MCF 10A (cell line): ENCODE measurements at regions of chr1 and their contacts with region 1.

Region 1: GRCh38 chr1:231240883-231241735 is at the start of gene GNPAT:
- DNase-seq: peak; percentile 95
- H3K4me3 Mint-ChIP-seq: peak within 1 kb of the TSS; percentile 85
- H3K27ac Mint-ChIP-seq: peak within 1 kb of the TSS; percentile 97
- H3K4me1 Mint-ChIP-seq: peaks cover 50% of the 10 kb centered on the region
- H3K27me3 Mint-ChIP-seq: no peaks in the 10 kb centered on the region
- CTCF ChIP-seq: no peak
- total RNA-seq, gene GNPAT: 60.9 and 64.4 TPM in 2 replicates

Region 2: DNA sequence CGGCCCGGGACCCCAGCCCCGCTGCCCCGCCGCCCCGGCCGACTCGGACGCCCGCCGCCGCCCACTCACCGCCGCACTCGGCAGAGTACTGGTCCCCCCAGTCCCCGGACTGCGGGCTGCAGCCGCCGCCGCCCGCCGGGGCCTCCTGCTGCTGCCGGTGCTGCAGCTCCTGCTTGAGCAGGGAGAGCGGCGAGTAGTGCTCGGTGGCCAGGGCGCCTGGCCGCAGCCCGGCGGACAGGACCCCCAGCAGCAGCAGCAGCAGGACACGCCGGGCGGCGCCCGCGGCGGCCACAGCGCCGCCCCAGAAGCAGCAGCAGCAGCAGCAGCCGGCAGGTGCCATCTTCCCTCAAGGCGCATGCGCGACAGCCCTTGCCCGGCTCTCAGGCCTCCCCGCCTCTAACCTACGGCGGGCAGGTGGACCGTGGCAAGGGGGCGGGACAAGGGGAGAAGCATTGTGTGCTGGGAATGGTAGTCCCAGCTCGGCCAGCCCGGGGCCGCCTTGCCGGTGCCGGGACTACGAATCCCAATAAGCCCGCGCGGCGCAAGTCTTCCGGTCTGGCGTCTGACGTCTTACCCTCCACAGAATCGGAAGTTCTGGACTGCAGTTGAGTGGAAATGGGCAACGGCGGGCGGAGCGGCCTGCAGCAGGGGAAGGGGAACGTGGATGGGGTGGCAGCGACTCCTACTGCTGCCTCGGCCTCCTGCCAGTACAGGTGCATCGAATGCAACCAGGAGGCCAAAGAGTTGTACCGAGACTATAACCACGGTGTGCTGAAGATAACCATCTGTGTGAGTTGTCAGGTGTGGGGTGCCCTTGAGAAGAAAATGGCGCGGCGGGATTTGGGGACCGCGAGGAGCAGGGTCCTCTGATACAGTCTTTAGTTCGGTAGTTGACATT is 262.4 kb before region 1 on chr1 and contains the starts of genes ARV1 and TTC13:
- CTCF ChIA-PET with region 1: no interaction called
- POLR2A ChIA-PET with region 1: interaction called, 24 read pairs
- intact Hi-C with region 1: no loop called
- DNase-seq: peak; percentile 100
- H3K4me3 Mint-ChIP-seq: no peak within 1 kb of the TSS
- H3K27ac Mint-ChIP-seq: peak within 1 kb of the TSS; percentile 83
- H3K4me1 Mint-ChIP-seq: peaks cover 7% of the 10 kb centered on the region
- H3K27me3 Mint-ChIP-seq: no peaks in the 10 kb centered on the region
- CTCF ChIP-seq: peak; percentile 15
- total RNA-seq, gene ARV1: 41.8 and 51.8 TPM in 2 replicates
- total RNA-seq, gene TTC13: 29.9 and 35.2 TPM in 2 replicates

Region 3: DNA sequence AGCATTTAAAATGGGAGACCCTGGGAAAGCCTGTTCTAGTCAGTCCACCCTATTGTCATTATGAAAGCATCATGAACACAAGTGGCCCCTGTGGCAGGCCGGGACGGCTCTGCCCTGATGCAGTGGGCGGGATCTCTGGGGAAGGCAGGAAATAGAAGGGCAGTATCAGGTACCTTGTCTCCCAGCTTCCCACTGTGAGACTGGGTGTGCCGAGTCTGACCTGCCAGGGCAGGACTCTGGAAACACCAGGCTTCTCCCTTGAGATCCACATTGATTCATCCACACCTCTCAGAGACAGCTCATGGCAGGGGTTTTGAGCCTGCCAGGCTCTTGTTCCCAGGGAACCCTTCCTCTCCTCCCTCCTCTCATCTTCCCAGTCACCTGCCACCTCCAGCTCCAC is 24.6 kb before region 1 on chr1:
- CTCF ChIA-PET with region 1: interaction called, 9 read pairs
- POLR2A ChIA-PET with region 1: interaction called, 15 read pairs
- intact Hi-C with region 1: no loop called
- DNase-seq: peak; percentile 63
- H3K4me3 Mint-ChIP-seq: no peak overlapping the region
- H3K27ac Mint-ChIP-seq: no peak overlapping the region
- H3K4me1 Mint-ChIP-seq: peaks cover 17% of the 10 kb centered on the region
- H3K27me3 Mint-ChIP-seq: no peaks in the 10 kb centered on the region
- CTCF ChIP-seq: no peak

Region 4: GRCh38 chr1:231226156-231226555 is 15.0 kb before region 1 on chr1:
- CTCF ChIA-PET with region 1: interaction called, 4 read pairs
- POLR2A ChIA-PET with region 1: interaction called, 16 read pairs
- intact Hi-C with region 1: no loop called
- DNase-seq: no peak
- H3K4me3 Mint-ChIP-seq: no peak overlapping the region
- H3K27ac Mint-ChIP-seq: no peak overlapping the region
- H3K4me1 Mint-ChIP-seq: no peaks in the 10 kb centered on the region
- H3K27me3 Mint-ChIP-seq: no peaks in the 10 kb centered on the region
- CTCF ChIP-seq: no peak

Region 5: DNA sequence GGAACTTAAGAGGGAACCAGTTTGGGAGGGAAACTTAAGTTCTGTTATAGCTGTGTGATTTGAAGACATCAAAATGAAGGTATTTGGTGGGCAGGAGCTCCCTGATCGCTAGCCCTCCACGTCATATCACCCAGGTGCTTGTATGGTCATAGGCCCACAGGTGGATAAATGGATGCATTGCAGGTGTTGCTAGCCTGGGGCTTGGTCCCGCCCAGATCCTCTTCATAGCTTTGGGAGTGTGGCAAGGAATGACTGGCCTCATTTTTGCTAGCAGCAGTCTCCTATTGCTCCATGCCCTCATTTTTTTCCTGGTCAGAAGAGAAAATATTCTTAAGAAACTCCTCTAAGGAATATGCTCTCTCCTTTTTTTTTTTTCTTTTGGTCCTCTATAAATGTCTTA is 11.2 kb after region 1 on chr1:
- CTCF ChIA-PET with region 1: interaction called, 5 read pairs
- POLR2A ChIA-PET with region 1: interaction called, 51 read pairs
- intact Hi-C with region 1: no loop called
- DNase-seq: peak; percentile 36
- H3K4me3 Mint-ChIP-seq: no peak overlapping the region
- H3K27ac Mint-ChIP-seq: no peak overlapping the region
- H3K4me1 Mint-ChIP-seq: no peaks in the 10 kb centered on the region
- H3K27me3 Mint-ChIP-seq: no peaks in the 10 kb centered on the region
- CTCF ChIP-seq: no peak

Region 6: DNA sequence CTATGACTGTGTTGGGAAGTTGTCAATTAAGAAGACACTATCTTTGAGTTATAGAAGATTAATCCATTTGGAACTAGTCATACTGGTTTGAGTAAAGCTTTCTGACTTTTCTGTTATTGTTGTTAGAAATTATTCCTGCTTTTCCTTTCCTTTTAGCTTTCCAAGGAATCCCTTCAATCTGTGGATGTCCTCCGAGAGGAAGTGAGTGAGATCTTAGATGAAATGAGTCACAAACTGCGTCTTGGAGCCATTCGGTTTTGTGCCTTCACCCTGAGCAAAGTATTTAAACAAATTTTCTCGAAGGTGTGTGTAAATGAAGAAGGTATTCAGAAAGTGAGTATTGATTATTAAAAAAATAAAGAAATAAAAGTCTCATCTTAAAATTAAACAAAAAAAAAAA is 19.2 kb after region 1 on chr1:
- CTCF ChIA-PET with region 1: interaction called, 6 read pairs
- POLR2A ChIA-PET with region 1: interaction called, 16 read pairs
- intact Hi-C with region 1: no loop called
- DNase-seq: no peak
- H3K4me3 Mint-ChIP-seq: no peak overlapping the region
- H3K27ac Mint-ChIP-seq: no peak overlapping the region
- H3K4me1 Mint-ChIP-seq: no peaks in the 10 kb centered on the region
- H3K27me3 Mint-ChIP-seq: no peaks in the 10 kb centered on the region
- CTCF ChIP-seq: no peak

Region 7: GRCh38 chr1:231278100-231278790 is 37.1 kb after region 1 on chr1:
- CTCF ChIA-PET with region 1: no interaction called
- POLR2A ChIA-PET with region 1: interaction called, 13 read pairs
- intact Hi-C with region 1: no loop called
- DNase-seq: peak; percentile 51
- H3K4me3 Mint-ChIP-seq: no peak overlapping the region
- H3K27ac Mint-ChIP-seq: peak overlapping the region; percentile 40
- H3K4me1 Mint-ChIP-seq: peaks cover 20% of the 10 kb centered on the region
- H3K27me3 Mint-ChIP-seq: no peaks in the 10 kb centered on the region
- CTCF ChIP-seq: no peak